Activated B cell treated with CpG ODN at 0.5 μM for 24 hours (primary cell): ENCODE measurements at regions of chr5 and their contacts with region 1.

Region 1: GRCh38 chr5:43120720-43121564 is at the start of gene ZNF131:
- DNase-seq: peak; percentile 99
- ATAC-seq: peak; percentile 86
- H3K4me3 Mint-ChIP-seq: peak within 1 kb of the TSS; percentile 90
- H3K27ac Mint-ChIP-seq: peak within 1 kb of the TSS; percentile 94
- H3K4me1 Mint-ChIP-seq: peaks cover 38% of the 10 kb centered on the region
- H3K27me3 Mint-ChIP-seq: no peaks in the 10 kb centered on the region
- CTCF ChIP-seq: no peak
- total RNA-seq, gene ZNF131: 50.8 and 57.6 TPM in 2 replicates

Region 2: DNA sequence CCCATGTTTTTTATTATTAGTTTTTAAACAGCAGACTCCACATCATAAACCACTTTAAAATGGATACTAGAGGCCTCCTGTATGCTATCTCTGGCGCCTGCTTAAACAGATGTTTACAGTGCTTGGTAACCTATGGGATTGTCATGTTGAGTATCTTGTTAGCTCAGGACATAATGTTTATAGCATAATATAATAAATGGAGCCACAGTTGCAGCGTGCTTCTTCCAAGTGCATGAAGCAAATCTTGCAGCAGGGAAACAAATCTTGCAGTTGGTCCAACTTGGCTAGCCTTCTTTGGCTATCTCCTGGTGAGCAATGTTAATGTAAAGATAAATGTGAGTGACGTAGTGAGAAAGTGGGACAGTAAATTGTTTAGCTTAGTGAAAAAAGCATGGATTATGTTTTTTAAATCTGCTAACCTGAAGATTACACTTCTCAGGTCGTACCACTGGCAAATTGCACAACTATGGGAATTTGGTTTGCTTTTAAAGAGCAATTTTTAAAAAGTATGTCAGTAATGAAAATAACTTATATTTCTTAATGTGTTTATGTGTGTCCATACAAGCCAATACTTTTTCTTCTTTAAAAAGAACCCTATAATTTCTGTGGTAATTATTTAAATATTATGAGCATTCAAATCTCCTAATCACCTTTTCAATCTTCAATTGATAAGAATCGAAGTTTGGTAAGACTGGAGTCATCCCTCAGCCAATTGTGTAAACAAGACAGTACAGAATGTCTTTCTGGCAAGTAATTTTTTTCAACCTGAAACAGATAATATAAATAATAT is 694.7 kb before region 1 on chr5:
- CTCF ChIA-PET with region 1: no interaction called
- POLR2A ChIA-PET with region 1: no interaction called
- intact Hi-C with region 1: no loop called
- DNase-seq: no peak
- ATAC-seq: no peak
- H3K4me3 Mint-ChIP-seq: no peak overlapping the region
- H3K27ac Mint-ChIP-seq: no peak overlapping the region
- H3K4me1 Mint-ChIP-seq: no peaks in the 10 kb centered on the region
- H3K27me3 Mint-ChIP-seq: peaks cover 8% of the 10 kb centered on the region
- CTCF ChIP-seq: no peak

Region 3: DNA sequence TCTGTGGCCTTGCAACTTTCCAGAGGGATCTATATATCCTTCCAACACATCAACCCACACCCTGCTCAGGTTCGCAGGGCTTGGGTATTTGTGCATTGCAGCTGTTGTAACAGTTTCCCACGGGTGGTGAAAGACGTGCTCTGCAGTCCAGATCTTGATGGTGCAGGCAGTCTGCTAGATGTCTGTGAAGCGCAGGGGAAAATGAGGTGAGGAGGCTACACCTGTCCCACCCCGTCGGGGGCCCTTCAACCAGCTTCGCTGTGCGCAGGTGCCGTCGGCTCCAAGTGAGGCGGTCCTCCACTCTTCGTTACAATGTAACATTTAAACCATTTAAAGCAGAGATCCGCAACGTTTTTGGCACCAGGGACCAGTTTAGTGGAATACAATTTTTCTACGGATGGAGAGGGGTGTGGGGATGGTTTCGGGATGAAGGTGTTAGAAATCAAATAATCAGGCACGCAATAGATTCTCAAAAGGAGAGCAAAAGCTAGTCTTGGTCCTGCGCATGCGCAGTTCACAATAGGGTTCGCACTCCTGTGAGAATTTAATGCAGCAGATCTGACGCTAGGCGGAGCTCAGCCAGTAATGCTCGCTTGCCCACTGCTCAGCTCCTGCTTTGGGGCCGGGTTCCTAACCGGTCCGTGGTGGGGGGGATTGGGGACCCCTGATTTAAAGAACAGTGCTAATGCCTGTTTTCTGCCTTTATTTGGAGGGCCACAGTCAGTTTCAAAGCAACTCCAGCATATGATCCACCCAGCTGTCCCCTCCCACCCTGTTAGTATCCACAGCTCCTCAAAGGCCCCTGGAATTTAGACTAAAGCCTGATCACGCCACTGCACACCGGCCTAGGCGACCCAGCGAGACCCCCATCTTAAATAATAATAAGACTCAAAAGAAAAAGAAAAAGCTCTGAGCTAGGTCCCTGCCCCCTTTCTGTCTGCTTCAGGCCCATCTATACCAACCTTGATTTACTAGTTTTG is 212.1 kb before region 1 on chr5:
- CTCF ChIA-PET with region 1: interaction called, 10 read pairs
- POLR2A ChIA-PET with region 1: interaction called, 27 read pairs
- intact Hi-C with region 1: loop called (anchors 1 kb)
- DNase-seq: peak; percentile 71
- ATAC-seq: peak; percentile 94
- H3K4me3 Mint-ChIP-seq: peak overlapping the region; percentile 93
- H3K27ac Mint-ChIP-seq: peak overlapping the region; percentile 84
- H3K4me1 Mint-ChIP-seq: peaks cover 12% of the 10 kb centered on the region
- H3K27me3 Mint-ChIP-seq: peaks cover 11% of the 10 kb centered on the region
- CTCF ChIP-seq: peak; percentile 50

Region 4: GRCh38 chr5:43008369-43009153 is 112.4 kb before region 1 on chr5:
- CTCF ChIA-PET with region 1: no interaction called
- POLR2A ChIA-PET with region 1: interaction called, 58 read pairs
- intact Hi-C with region 1: loop called (anchors 1 kb)
- DNase-seq: peak; percentile 77
- ATAC-seq: peak; percentile 53
- H3K4me3 Mint-ChIP-seq: peak overlapping the region; percentile 89
- H3K27ac Mint-ChIP-seq: peak overlapping the region; percentile 98
- H3K4me1 Mint-ChIP-seq: peaks cover 31% of the 10 kb centered on the region
- H3K27me3 Mint-ChIP-seq: no peaks in the 10 kb centered on the region
- CTCF ChIP-seq: no peak

Region 5: GRCh38 chr5:43066799-43067741 is 53.9 kb before region 1 on chr5:
- CTCF ChIA-PET with region 1: interaction called, 12 read pairs
- POLR2A ChIA-PET with region 1: interaction called, 124 read pairs
- intact Hi-C with region 1: loop called (anchors 1 kb)
- DNase-seq: peak; percentile 83
- ATAC-seq: peak; percentile 55
- H3K4me3 Mint-ChIP-seq: peak overlapping the region; percentile 95
- H3K27ac Mint-ChIP-seq: peak overlapping the region; percentile 99
- H3K4me1 Mint-ChIP-seq: peaks cover 40% of the 10 kb centered on the region
- H3K27me3 Mint-ChIP-seq: no peaks in the 10 kb centered on the region
- CTCF ChIP-seq: no peak

Region 6: GRCh38 chr5:43191740-43192557 is 71.0 kb after region 1 on chr5 and contains the start of gene NIM1K:
- CTCF ChIA-PET with region 1: no interaction called
- POLR2A ChIA-PET with region 1: interaction called, 13 read pairs
- intact Hi-C with region 1: loop called (anchors 1 kb)
- DNase-seq: peak; percentile 45
- ATAC-seq: peak; percentile 65
- H3K4me3 Mint-ChIP-seq: peak within 1 kb of the TSS; percentile 84
- H3K27ac Mint-ChIP-seq: no peak within 1 kb of the TSS
- H3K4me1 Mint-ChIP-seq: peaks cover 28% of the 10 kb centered on the region
- H3K27me3 Mint-ChIP-seq: peaks cover 19% of the 10 kb centered on the region
- CTCF ChIP-seq: no peak
- total RNA-seq, gene NIM1K: 0.39 and 0.51 TPM in 2 replicates

Region 7: DNA sequence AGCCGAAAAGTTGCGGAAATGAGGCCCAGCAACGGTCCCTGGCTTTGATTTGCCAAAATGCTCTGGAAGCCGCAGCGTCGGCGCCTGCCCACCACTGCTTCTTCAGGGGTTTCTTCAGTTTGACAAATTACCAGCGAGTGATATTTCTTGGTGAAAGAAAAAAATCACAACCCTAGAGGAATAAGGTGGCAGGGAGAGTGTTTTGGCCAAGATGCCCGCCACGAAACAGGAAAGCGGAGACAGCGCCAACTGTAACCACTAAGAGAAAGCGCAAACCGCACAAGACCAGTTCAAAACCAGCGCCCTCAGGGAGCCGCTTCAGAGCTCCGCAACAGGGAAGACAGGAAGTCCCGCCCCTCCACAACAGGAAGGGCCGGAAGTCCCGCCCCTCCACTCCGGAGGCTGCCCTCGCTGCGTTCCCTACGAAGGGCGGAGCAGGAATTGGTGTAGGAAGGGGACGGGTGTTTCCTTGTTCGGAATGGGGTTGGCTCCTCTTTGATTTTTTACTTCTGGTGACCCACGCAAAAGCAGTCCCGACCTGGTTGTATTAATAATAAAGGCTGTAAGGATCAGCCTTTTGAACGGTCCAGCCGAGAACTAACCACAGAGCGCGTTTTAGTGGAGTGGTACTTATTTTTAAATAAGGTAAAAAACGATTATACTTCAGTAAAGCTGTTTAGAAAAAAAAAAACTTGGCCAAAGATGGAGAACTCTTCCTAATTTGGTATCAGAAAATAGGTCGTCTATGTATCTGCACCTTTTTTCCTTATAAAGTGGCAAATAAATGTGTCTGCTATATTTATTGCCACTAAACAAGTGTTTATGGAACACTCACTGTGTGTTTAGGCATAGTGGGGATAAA is 394.1 kb after region 1 on chr5 and contains the start of gene C5orf34:
- CTCF ChIA-PET with region 1: no interaction called
- POLR2A ChIA-PET with region 1: interaction called, 10 read pairs
- intact Hi-C with region 1: loop called (anchors 1 kb)
- DNase-seq: peak; percentile 92
- ATAC-seq: peak; percentile 96
- H3K4me3 Mint-ChIP-seq: peak within 1 kb of the TSS; percentile 95
- H3K27ac Mint-ChIP-seq: peak within 1 kb of the TSS; percentile 95
- H3K4me1 Mint-ChIP-seq: peaks cover 23% of the 10 kb centered on the region
- H3K27me3 Mint-ChIP-seq: no peaks in the 10 kb centered on the region
- CTCF ChIP-seq: no peak
- total RNA-seq, gene C5orf34: 4.4 and 4.7 TPM in 2 replicates

Region 8: DNA sequence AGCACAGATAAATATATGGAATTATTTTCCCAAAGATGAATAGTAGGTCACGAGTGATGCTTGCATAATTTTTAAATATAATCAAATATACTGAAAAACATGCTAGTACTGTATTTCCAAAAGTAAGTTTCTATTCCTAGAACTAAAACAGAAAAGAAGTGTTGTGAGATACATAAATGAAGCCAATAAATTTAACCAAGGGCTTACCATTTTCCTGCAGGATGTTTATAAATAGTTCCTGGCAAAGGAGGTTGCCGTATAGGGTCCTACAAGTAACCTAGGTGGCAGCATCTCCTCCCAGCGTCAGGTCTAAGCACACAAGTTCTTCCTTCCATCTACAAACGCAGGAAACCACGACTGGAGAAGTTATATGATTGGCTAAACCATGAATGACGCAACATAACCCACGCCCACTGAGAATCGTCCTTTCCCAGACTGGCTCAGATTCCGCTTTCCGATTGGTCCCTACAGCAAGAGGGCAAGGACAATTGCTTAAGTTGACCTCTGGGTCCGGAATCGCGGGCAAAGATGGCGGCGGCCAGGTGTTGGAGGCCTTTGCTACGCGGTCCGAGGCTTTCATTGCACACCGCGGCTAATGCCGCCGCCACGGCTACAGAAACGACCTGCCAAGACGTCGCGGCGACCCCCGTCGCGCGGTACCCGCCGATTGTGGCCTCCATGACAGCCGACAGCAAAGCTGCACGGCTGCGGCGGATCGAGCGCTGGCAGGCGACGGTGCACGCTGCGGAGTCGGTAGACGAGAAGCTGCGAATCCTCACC is 1687.7 kb after region 1 on chr5 and contains the start of gene MRPS30:
- CTCF ChIA-PET with region 1: no interaction called
- POLR2A ChIA-PET with region 1: no interaction called
- intact Hi-C with region 1: loop called (anchors 2 kb)
- DNase-seq: peak; percentile 72
- ATAC-seq: peak; percentile 96
- H3K4me3 Mint-ChIP-seq: peak within 1 kb of the TSS; percentile 97
- H3K27ac Mint-ChIP-seq: peak within 1 kb of the TSS; percentile 94
- H3K4me1 Mint-ChIP-seq: peaks cover 31% of the 10 kb centered on the region
- H3K27me3 Mint-ChIP-seq: peaks cover 4% of the 10 kb centered on the region
- CTCF ChIP-seq: no peak
- total RNA-seq, gene MRPS30: 41.4 and 41.8 TPM in 2 replicates